A549 (cell line): ENCODE measurements at regions of chr7 and their contacts with region 1.

Region 1: DNA sequence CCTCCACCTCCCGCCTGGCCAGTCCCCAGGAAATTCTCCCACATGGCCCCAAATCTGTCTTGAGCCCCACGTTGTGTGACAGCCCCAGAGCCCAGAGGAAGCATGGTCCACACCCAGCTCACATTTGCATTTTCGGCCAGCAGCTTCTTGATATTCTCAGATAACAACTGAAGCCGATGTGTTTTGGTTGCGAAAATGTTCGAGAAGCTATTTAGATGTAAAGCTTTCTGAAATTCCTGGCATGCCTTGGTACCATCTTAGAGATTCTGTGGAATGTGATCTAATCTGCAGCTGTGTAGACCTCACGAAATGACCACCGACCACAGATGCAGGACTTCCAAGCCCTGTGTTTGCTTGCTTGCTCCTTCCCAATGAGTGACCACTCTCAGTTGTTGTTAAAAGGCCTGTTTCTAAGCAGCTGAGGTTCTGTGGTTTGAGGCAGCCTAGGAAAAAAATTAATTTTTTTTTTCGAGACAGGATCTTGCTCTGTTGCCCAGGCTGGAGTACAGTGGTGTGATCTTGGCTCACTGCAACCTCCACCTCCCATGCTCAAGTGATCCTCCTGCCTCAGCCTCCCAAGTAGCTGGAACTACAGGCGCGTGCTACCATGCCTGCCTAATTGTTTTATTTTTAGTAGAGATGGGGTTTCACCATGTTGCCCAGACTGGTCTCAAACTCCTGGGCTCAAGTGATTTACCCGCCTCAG is 8.8 kb downstream of the SLC4A2 start:
- DNase-seq: no peak
- ATAC-seq: no peak
- H3K4me3 ChIP-seq: no peak overlapping the region
- H3K27ac ChIP-seq: no peak overlapping the region
- H3K4me1 ChIP-seq: peaks cover 20% of the 10 kb centered on the region
- CTCF ChIP-seq: no peak
- EP300 ChIP-seq: no peak
- POLR2A ChIP-seq: no peak
- RAD21 ChIP-seq: no peak

Region 2: GRCh38 chr7:150838970-150839650 is 229.1 kb before region 1 on chr7:
- CTCF ChIA-PET with region 1: no interaction called
- POLR2A ChIA-PET with region 1: no interaction called
- DNase-seq: no peak
- ATAC-seq: no peak
- H3K4me3 ChIP-seq: no peak overlapping the region
- H3K27ac ChIP-seq: no peak overlapping the region
- H3K4me1 ChIP-seq: no peaks in the 10 kb centered on the region
- CTCF ChIP-seq: no peak
- EP300 ChIP-seq: no peak
- POLR2A ChIP-seq: no peak
- RAD21 ChIP-seq: no peak

Region 3: DNA sequence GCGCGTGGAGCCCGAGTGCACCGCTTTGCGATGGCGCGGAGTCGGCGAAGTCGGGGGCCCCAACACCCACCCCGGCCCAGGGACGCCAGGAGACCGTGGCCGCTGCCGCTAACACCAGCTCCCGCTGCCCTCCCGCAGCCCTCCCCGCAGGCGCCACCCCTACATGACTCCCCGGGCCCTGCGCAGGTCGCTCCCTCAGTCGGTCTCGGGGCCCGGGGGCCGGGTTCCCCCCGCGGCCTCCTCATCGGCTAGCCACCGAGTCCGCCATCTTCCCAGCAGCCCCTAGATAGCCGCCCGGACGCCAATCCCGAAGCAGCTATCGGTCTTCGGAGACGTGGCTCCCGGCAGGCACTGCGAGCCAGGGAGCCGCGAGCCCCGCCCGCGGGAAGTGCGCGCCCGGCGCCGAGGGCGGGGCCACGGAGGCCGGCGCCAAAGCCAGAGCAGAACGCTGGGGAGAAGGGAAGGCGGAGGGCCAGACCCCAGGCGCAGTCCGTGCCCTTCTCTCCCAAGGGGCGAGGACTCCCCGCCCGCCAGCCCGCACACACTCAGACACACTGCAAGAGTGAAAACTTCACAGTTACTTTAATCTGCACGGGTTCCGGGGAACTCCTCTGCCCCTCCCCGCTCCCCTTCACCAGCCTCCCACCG is 12.4 kb after region 1 on chr7 and contains the start of gene FASTK:
- CTCF ChIA-PET with region 1: interaction called, 64 read pairs
- POLR2A ChIA-PET with region 1: interaction called, 20 read pairs
- DNase-seq: peak; percentile 89 to 92
- ATAC-seq: peak; percentile 51 to 82
- H3K4me3 ChIP-seq: peak within 1 kb of the TSS; percentile 93
- H3K27ac ChIP-seq: peak within 1 kb of the TSS; percentile 98
- H3K4me1 ChIP-seq: peaks cover 61% of the 10 kb centered on the region
- CTCF ChIP-seq: no peak
- EP300 ChIP-seq: no peak
- POLR2A ChIP-seq: peak; percentile 82
- RAD21 ChIP-seq: no peak
- polyA plus RNA-seq, gene FASTK: 38.5 and 51.7 TPM in 2 replicates

Region 4: GRCh38 chr7:151085691-151086620 is 17.7 kb after region 1 on chr7 and contains the start of gene AGAP3:
- CTCF ChIA-PET with region 1: interaction called, 32 read pairs
- POLR2A ChIA-PET with region 1: interaction called, 14 read pairs
- DNase-seq: peak; percentile 76 to 79
- ATAC-seq: peak; percentile 50 to 74
- H3K4me3 ChIP-seq: peak within 1 kb of the TSS; percentile 86
- H3K27ac ChIP-seq: peak within 1 kb of the TSS; percentile 84 to 98
- H3K4me1 ChIP-seq: peaks cover 43% of the 10 kb centered on the region
- CTCF ChIP-seq: no peak
- EP300 ChIP-seq: no peak
- POLR2A ChIP-seq: peak; percentile 81
- RAD21 ChIP-seq: no peak
- polyA plus RNA-seq, gene AGAP3: 33.8 and 34.1 TPM in 2 replicates